MCF 10A (cell line): ENCODE measurements at regions of chr11 and their contacts with region 1.

Region 1: GRCh38 chr11:123549926-123550917 is 104.2 kb downstream of the SCN3B start:
- DNase-seq: no peak
- H3K4me3 Mint-ChIP-seq: no peak overlapping the region
- H3K27ac Mint-ChIP-seq: no peak overlapping the region
- H3K4me1 Mint-ChIP-seq: peaks cover 6% of the 10 kb centered on the region
- H3K27me3 Mint-ChIP-seq: peaks cover 41% of the 10 kb centered on the region
- CTCF ChIP-seq: no peak

Region 2: DNA sequence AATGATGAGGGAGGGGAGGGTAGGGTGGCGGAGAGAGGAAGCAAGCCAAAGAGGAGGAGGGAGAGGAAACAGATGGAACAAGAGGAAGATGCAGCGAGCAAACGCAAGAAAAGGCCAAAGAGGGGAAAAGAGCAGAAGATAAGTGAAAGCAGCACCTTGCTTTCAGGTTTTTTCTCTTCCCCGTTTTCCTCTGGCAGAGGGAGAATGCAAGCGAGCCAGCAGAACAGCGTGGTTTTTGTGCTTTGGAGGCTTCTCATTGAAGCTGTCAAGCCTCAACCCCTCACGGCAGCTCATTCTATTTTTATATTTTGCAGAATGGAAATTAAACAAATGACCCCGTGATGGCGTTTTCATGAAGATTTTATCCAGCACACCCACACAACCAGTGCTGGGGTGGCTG is 187.3 kb before region 1 on chr11:
- CTCF ChIA-PET with region 1: no interaction called
- POLR2A ChIA-PET with region 1: no interaction called
- intact Hi-C with region 1: no loop called
- DNase-seq: no peak
- H3K4me3 Mint-ChIP-seq: no peak overlapping the region
- H3K27ac Mint-ChIP-seq: no peak overlapping the region
- H3K4me1 Mint-ChIP-seq: no peaks in the 10 kb centered on the region
- H3K27me3 Mint-ChIP-seq: peaks cover 84% of the 10 kb centered on the region
- CTCF ChIP-seq: no peak

Region 3: DNA sequence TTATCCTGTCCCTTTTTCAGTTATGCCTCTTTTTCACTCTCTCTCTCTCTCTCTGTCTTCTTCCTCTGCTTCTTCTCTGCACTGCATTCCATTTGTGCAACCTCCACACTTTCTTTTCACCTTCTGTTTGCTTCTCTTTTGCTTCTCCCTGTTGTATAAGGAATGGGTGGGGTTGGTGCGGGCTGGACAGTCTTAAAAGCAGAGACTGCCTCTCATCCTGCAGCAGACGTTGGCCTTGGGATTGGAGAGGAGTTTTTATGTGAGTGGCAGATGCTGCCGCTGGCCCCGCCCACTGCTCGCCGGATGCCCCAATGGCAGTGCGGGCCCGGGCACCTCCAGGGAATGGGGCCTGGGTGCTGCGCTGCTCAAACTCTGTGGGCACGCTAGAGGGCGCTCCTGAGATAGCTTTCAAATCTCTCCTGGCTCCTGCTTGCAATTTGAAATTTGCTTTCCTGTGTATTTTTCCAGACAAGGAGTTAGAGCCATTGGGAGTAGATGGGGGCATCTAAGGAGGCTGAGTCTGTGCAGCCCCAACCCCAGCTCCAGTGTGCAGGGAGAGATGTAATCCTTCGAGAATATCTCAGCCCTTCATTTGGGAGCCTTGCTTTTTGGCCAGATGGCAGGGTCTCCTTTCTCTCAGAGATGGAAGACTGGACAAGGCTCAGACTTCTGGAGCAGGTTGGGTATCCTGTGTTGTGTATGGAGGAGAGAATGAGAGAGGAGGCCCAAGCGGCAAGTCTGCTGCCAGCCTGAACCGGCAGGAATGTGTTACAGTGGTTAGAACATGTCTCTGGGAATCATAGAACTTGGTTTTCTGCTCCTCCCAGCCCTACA is 39.0 kb before region 1 on chr11:
- CTCF ChIA-PET with region 1: interaction called, 10 read pairs
- POLR2A ChIA-PET with region 1: interaction called, 3 read pairs
- intact Hi-C with region 1: loop called (anchors 1 kb)
- DNase-seq: peak; percentile 90
- H3K4me3 Mint-ChIP-seq: no peak overlapping the region
- H3K27ac Mint-ChIP-seq: no peak overlapping the region
- H3K4me1 Mint-ChIP-seq: peaks cover 6% of the 10 kb centered on the region
- H3K27me3 Mint-ChIP-seq: peaks cover 37% of the 10 kb centered on the region
- CTCF ChIP-seq: peak; percentile 79

Region 4: GRCh38 chr11:123590296-123590912 is 40.2 kb after region 1 on chr11:
- CTCF ChIA-PET with region 1: no interaction called
- POLR2A ChIA-PET with region 1: no interaction called
- intact Hi-C with region 1: no loop called
- DNase-seq: peak; percentile 72
- H3K4me3 Mint-ChIP-seq: no peak overlapping the region
- H3K27ac Mint-ChIP-seq: no peak overlapping the region
- H3K4me1 Mint-ChIP-seq: no peaks in the 10 kb centered on the region
- H3K27me3 Mint-ChIP-seq: peaks cover 18% of the 10 kb centered on the region
- CTCF ChIP-seq: no peak